ENCODE measurements at regions of chr3 and their contacts with region 1.

Region 1: GRCh38 chr3:171772427-171773056 is 37.7 kb downstream of the PLD1 start:
- DNase-seq: no peak
- H3K4me3 ChIP-seq: no peak overlapping the region
- H3K27ac ChIP-seq: no peak overlapping the region
- H3K27me3 ChIP-seq: no peaks in the 10 kb centered on the region
- CTCF ChIP-seq: peak; percentile 83

Region 2: GRCh38 chr3:171494457-171495109 is 278.0 kb before region 1 on chr3:
- CTCF ChIA-PET with region 1: no interaction called
- POLR2A ChIA-PET with region 1: no interaction called
- DNase-seq: no peak
- H3K4me3 ChIP-seq: no peak overlapping the region
- H3K27ac ChIP-seq: no peak overlapping the region
- H3K27me3 ChIP-seq: no peaks in the 10 kb centered on the region
- CTCF ChIP-seq: no peak

Region 3: GRCh38 chr3:171566803-171567422 is 205.6 kb before region 1 on chr3:
- CTCF ChIA-PET with region 1: interaction called, 13 read pairs
- POLR2A ChIA-PET with region 1: no interaction called
- DNase-seq: peak; percentile 10
- H3K4me3 ChIP-seq: no peak overlapping the region
- H3K27ac ChIP-seq: no peak overlapping the region
- H3K27me3 ChIP-seq: no peaks in the 10 kb centered on the region
- CTCF ChIP-seq: peak; percentile 70

Region 4: DNA sequence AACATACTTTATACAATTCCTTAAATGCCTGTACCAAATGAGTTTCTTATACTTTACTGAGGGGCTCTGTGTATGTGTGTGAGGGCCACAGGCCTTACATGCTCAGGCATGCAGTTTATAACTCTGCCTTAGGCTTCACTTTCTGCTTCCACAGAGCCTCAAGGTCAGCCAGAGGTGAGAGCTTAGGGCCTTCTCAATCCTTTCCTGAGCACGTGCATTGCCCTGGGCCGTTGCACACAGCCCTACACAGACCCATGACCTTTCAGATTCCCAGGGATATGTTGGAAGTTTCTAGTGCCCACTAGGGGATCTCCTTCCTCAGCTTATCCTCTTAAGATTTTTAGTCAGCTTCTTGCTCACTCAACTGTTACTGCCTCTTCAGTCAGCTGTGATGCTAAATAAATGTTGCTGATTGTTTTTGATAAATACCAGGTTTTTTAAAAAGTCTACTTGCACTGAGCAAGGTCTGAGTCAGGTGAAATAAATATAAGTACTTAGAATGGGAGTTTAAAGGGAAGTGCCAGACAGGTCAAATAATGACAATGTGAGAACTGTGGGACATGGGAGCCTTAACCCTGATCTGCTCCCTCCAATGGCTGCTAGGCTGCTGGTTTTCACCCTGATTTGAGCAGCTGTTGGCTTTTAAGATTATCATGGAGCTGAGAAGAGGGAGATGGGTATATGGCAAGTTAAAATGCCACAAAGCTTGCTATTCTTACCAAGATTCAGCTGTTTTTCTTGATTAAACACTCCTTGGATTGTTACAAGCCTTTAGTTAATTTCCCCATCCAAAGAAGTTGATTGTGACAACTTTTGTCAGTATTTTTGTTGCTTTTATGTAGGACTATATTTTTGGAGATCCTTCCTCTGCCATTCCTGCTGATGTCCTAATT is 131.8 kb before region 1 on chr3:
- CTCF ChIA-PET with region 1: interaction called, 116 read pairs
- POLR2A ChIA-PET with region 1: interaction called, 7 read pairs
- DNase-seq: peak; percentile 21
- H3K4me3 ChIP-seq: no peak overlapping the region
- H3K27ac ChIP-seq: peak overlapping the region; percentile 78
- H3K27me3 ChIP-seq: no peaks in the 10 kb centered on the region
- CTCF ChIP-seq: peak; percentile 50

Region 5: DNA sequence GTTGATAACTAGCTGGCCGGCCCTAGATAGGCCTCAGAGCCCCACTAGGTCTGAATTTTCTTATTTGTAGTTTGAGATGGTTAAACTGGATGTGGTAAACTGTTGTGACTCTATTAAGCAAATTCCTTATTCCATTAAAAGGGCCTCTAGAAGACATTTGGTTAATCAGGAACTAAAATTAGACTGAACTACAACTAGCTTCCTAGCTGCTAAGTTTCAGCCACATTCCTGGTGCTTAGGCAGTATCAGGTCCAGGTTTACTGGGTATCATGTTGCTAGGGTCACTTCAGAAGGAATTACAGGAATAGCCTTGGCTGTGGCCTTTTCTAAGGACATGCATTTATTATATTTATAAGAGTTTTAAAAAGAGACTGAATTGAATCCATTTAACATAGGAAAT is 98.6 kb before region 1 on chr3:
- CTCF ChIA-PET with region 1: interaction called, 12 read pairs
- POLR2A ChIA-PET with region 1: no interaction called
- DNase-seq: no peak
- H3K4me3 ChIP-seq: no peak overlapping the region
- H3K27ac ChIP-seq: no peak overlapping the region
- H3K27me3 ChIP-seq: no peaks in the 10 kb centered on the region
- CTCF ChIP-seq: no peak

Region 6: GRCh38 chr3:171748064-171748918 is 24.3 kb before region 1 on chr3:
- CTCF ChIA-PET with region 1: interaction called, 20 read pairs
- POLR2A ChIA-PET with region 1: no interaction called
- DNase-seq: no peak
- H3K4me3 ChIP-seq: no peak overlapping the region
- H3K27ac ChIP-seq: no peak overlapping the region
- H3K27me3 ChIP-seq: no peaks in the 10 kb centered on the region
- CTCF ChIP-seq: no peak

Region 7: DNA sequence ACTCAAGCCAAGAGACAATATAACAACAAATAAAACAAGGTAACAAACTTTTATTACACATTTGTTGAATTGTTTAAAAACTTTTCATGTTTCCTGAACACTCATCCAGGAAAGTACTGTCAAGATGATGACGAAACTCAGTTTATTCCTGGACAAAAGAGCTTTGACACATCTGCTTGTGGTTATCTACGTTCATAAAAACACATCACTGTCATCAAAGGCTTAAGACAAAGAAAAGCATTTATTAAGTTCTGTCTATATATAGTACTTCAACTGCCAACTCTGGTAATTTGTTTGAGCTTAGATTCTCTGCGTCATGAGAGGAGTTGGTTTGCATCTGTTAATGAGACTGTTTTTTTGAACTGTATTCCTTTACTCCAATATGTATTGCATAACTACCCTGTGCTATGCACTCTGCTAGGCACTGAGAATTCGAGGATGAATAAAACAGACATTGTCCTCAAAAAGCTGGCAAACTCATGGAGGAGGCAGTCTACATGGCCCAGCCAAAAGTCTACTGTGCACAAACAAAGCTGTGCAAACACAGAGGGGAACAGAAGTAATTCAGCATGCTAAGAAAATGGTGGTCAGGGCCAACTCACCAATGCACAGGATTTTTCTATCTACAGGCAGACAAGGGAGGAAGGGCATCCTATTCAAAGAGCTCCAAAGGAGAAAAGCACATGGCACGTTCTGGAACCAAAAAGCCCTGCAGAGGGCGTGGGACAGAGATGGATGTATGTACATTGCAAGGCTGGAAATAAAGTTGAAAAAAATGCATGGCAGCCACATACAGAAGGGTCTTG is 16.2 kb after region 1 on chr3:
- CTCF ChIA-PET with region 1: interaction called, 24 read pairs
- POLR2A ChIA-PET with region 1: no interaction called
- DNase-seq: no peak
- H3K4me3 ChIP-seq: no peak overlapping the region
- H3K27ac ChIP-seq: no peak overlapping the region
- H3K27me3 ChIP-seq: no peaks in the 10 kb centered on the region
- CTCF ChIP-seq: no peak

Region 8: DNA sequence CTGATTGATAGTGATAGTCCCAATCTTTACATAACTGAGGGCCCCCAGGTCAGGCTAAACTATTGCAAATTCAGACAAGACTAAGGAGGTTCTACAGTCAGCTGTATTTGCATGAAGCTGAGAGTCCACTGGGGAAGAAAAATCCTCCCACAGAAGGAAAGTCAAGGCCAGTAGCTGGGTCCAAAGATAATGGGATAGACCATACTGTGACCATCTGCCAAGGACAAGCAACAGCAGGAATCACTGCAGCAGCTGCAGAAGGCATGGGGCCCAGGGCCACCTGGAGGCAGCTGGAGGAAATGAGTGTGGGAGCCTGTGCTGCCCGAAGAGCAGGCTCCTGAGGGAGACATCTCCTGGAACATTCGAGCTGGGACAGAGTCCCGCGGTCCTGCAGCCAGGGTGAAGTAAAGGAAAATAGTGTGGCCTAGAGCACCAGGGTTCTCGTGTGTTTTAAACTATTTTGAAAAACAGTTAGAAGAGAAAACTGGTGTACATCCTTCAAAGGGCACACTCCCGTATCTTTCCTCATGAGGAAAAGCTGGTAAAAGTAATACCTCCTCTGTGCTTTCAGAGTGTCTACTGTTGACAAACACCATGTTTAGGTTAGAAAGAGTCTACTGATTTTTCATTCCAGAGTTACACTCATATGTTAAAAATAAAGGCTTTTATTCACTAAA is 57.4 kb after region 1 on chr3:
- CTCF ChIA-PET with region 1: interaction called, 18 read pairs
- POLR2A ChIA-PET with region 1: no interaction called
- DNase-seq: no peak
- H3K4me3 ChIP-seq: no peak overlapping the region
- H3K27ac ChIP-seq: no peak overlapping the region
- H3K27me3 ChIP-seq: no peaks in the 10 kb centered on the region
- CTCF ChIP-seq: peak; percentile 76

Region 9: DNA sequence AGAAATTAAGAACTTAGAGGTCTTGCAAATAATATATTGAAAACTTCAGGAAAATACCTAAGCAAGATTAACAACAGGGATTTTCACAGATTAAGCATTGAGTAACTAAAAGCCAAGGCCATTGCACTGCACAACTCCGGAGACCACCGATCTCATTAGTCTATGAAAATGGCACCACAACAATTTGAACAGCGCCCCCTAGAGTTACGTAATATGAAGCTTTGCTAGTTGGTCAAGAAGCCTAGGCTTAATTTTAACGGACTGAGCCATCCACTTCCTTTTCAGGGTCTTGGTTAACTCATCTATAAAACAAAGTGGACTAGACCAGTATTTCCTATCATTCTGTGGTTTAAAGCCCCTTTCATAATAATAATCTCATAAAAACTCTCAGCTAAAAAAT is 95.4 kb after region 1 on chr3:
- CTCF ChIA-PET with region 1: no interaction called
- POLR2A ChIA-PET with region 1: no interaction called
- DNase-seq: no peak
- H3K4me3 ChIP-seq: no peak overlapping the region
- H3K27ac ChIP-seq: no peak overlapping the region
- H3K27me3 ChIP-seq: no peaks in the 10 kb centered on the region
- CTCF ChIP-seq: peak; percentile 36

Region 10: GRCh38 chr3:171890398-171890797 is 117.9 kb after region 1 on chr3:
- CTCF ChIA-PET with region 1: no interaction called
- POLR2A ChIA-PET with region 1: no interaction called
- DNase-seq: no peak
- H3K4me3 ChIP-seq: no peak overlapping the region
- H3K27ac ChIP-seq: no peak overlapping the region
- H3K27me3 ChIP-seq: no peaks in the 10 kb centered on the region
- CTCF ChIP-seq: no peak

Measured in AG04450 (cell line).